HEK293 (cell line): ENCODE measurements at regions of chr10 and their contacts with region 1.

Region 1: GRCh38 chr10:21572578-21572977 is 38.5 kb downstream of the MLLT10 start:
- H3K4me3 ChIP-seq: no peak overlapping the region
- H3K27ac ChIP-seq: no peak overlapping the region
- H3K4me1 ChIP-seq: peaks cover 17% of the 10 kb centered on the region
- CTCF ChIP-seq: no peak

Region 2: GRCh38 chr10:21556527-21556926 is 16.1 kb before region 1 on chr10:
- CTCF ChIA-PET with region 1: no interaction called
- POLR2A ChIA-PET with region 1: interaction called, 12 read pairs
- H3K4me3 ChIP-seq: no peak overlapping the region
- H3K27ac ChIP-seq: no peak overlapping the region
- H3K4me1 ChIP-seq: no peaks in the 10 kb centered on the region
- CTCF ChIP-seq: no peak

Region 3: DNA sequence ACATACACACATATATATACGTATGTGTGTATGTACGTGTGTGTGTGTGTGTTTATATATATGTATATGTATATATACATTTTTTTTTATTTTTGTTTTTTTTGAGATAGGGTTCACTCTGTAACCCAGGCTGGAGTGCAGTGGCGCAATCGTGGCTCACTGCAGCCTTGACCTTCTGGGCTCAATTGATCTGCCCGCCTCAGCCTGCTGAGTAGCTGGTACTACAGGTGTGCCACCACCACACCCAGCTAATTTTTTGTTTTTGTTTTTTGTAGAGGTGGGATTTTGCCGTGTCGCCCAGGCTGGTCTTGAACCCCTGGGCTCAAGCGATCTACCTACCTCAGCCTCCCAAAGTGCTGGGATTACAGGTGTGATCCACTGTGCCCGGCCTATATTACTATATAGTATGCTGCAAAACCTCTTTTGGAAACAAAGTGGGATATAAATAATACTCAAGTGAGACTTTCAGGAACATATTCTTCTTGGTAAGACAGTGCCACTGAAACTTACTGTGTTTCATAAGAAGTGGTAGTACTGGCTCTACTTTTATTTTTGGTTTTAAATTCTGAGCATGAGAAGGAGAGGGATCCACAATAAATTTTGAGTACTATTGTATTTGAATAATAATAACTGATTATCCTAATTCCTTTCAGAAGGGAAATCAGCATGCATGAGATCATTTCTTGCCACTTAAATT is 12.4 kb after region 1 on chr10:
- CTCF ChIA-PET with region 1: no interaction called
- POLR2A ChIA-PET with region 1: no interaction called
- H3K4me3 ChIP-seq: no peak overlapping the region
- H3K27ac ChIP-seq: no peak overlapping the region
- H3K4me1 ChIP-seq: no peaks in the 10 kb centered on the region
- CTCF ChIP-seq: no peak

Region 4: GRCh38 chr10:21715531-21716195 is 143.1 kb after region 1 on chr10:
- CTCF ChIA-PET with region 1: no interaction called
- POLR2A ChIA-PET with region 1: no interaction called
- H3K4me3 ChIP-seq: no peak overlapping the region
- H3K27ac ChIP-seq: no peak overlapping the region
- H3K4me1 ChIP-seq: peaks cover 2% of the 10 kb centered on the region; the same call in 1 of the 2 replicates
- CTCF ChIP-seq: no peak